Dorsolateral prefrontal cortex (tissue), 120 donors: ENCODE measurements at regions of chr1 and their contacts with region 1.

Region 1: GRCh38 chr1:107056426-107057196 is at the start of gene PRMT6:
- DNase-seq: peak; percentile 58 to 91 (median 76)
- H3K4me3 ChIP-seq: peak within 1 kb of the TSS; percentile 61 to 96 (median 88)
- H3K27ac ChIP-seq: peak within 1 kb of the TSS; percentile 37 to 97 (median 89)
- H3K27me3 ChIP-seq: no peaks in the 10 kb centered on the region
- CTCF ChIP-seq: peak in 14 of 56 donors; percentile 2 to 28 (median 14)
- total RNA-seq, gene PRMT6: 5.7 to 16.0 (median 11.7) TPM

Region 2: DNA sequence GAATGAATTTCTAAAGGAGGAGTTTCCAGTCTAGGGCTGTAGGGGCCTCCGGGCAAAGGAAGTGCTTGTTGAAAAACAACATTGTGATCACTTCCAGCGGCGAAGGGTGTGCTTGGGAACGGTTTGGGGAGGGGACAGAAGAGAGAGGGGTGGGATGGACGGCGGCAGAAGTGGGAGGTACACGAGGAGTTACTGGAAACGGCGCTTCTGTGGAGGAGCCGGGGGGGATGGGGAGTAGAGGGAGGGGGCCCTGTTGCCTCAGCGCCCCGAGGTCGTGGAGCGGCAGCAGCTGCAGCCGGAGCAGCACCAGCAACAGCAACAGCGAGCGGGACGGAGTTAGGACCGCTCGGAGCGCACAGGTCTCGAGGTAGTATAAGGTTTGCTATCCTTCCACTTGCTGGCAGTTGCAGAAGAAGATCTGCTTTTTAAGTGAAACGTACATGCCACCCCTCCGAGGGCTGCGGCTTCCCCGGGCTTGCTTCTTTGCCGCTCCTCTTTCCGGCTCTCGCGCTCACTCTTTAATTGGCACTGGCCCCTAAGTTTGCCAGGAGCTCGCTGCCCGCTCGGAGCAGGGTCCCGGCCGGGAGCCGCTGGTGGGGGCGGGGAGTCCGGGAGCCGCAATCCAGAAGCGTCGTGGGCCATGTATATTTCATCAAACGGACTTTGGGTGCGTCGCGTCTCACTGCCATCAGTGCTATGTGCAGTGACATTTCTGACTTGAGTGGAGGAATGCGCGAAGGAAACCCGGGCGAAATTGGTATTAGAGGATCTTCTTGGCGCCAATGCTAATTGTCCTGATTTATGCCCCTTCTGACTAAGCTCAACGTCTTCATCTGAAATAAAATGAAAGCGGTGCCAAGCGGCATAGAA is 83.5 kb after region 1 on chr1:
- intact Hi-C with region 1: loop called (anchors 2 to 10 kb)
- DNase-seq: peak in 7 of 10 donors; percentile 22 to 55 (median 43)
- H3K4me3 ChIP-seq: peak overlapping the region; percentile 48 to 84 (median 67)
- H3K27ac ChIP-seq: peak overlapping the region in 34 of 59 donors; percentile 3 to 73 (median 40)
- H3K27me3 ChIP-seq: peaks cover 0 to 7% (median 0%) of the 10 kb centered on the region in 45 donors
- CTCF ChIP-seq: peak in 1 of 56 donors; percentile 15

Region 3: GRCh38 chr1:107405236-107405635 is 348.6 kb after region 1 on chr1:
- intact Hi-C with region 1: no loop called
- DNase-seq: no peak
- H3K4me3 ChIP-seq: no peak overlapping the region
- H3K27ac ChIP-seq: peak overlapping the region in 1 of 59 donors; percentile 11
- H3K27me3 ChIP-seq: no peaks in the 10 kb centered on the region
- CTCF ChIP-seq: no peak